ENCODE measurements at regions of chr10 and their contacts with region 1.

Region 1: GRCh38 chr10:27241652-27242472 is 1.3 kb upstream of the ACBD5 start:
- DNase-seq: peak; percentile 94
- ATAC-seq: peak; percentile 71
- H3K4me3 Mint-ChIP-seq: peak overlapping the region; percentile 98
- H3K27ac Mint-ChIP-seq: peak overlapping the region; percentile 100
- H3K4me1 Mint-ChIP-seq: peaks cover 28% of the 10 kb centered on the region
- H3K27me3 Mint-ChIP-seq: no peaks in the 10 kb centered on the region

Region 2: GRCh38 chr10:26437637-26438461 is 804.0 kb before region 1 on chr10 and contains the start of gene APBB1IP:
- CTCF ChIA-PET with region 1: no interaction called
- POLR2A ChIA-PET with region 1: no interaction called
- intact Hi-C with region 1: loop called in 1 of 2 experiments (anchors 5 kb)
- DNase-seq: peak; percentile 73
- ATAC-seq: peak; percentile 56
- H3K4me3 Mint-ChIP-seq: peak within 1 kb of the TSS; percentile 89
- H3K27ac Mint-ChIP-seq: peak within 1 kb of the TSS; percentile 97
- H3K4me1 Mint-ChIP-seq: peaks cover 49% of the 10 kb centered on the region
- H3K27me3 Mint-ChIP-seq: no peaks in the 10 kb centered on the region
- total RNA-seq, gene APBB1IP: 53.3 to 66.4 TPM

Region 3: GRCh38 chr10:27099916-27100812 is 141.7 kb before region 1 on chr10 and contains the start of gene ANKRD26:
- CTCF ChIA-PET with region 1: no interaction called
- POLR2A ChIA-PET with region 1: interaction called, 3 read pairs
- intact Hi-C with region 1: loop called in 1 of 2 experiments (anchors 2 kb)
- DNase-seq: peak; percentile 97
- ATAC-seq: peak; percentile 66
- H3K4me3 Mint-ChIP-seq: peak within 1 kb of the TSS; percentile 84
- H3K27ac Mint-ChIP-seq: peak within 1 kb of the TSS; percentile 93
- H3K4me1 Mint-ChIP-seq: peaks cover 49% of the 10 kb centered on the region
- H3K27me3 Mint-ChIP-seq: no peaks in the 10 kb centered on the region
- total RNA-seq, gene ANKRD26: 10.2 to 13.2 TPM

Region 4: DNA sequence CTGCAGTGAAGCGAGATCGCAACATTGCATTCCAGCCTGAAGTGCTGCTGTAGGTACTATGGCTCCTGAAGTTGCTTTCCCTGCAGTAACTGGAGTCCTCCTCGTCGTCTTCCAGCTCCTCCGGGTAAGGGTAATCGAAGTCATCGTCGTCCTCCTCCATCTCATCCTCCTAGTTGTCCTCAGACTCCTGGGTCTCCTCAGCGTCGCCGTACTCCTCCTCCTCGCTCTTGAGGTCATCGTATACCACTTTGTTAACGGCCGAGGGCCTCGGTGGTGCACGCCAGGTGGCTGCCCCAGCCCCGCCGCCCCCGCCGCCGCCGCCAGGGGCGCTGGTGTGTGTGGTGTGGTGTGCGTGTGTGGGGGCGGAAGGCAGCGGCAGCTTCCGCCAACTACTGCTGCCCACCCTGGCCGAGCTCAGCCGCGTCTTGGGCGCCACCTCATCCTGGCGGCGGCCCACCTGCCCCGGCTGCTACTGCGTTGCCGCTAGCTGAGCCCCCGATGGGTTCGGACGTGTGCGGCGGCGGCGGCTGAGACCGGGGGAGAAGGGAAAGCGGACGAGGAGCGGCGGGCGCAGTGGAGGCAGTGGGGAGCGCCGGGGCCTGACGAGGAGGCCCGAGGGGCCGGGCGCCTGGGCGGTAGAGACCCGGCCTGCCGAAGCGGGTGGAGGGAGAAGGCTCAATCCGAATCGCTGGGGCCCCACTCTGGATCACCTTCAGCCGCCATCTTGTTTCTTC is 10.6 kb after region 1 on chr10:
- CTCF ChIA-PET with region 1: interaction called, 18 read pairs
- POLR2A ChIA-PET with region 1: interaction called, 7 read pairs
- intact Hi-C with region 1: loop called (anchors 1 kb)
- DNase-seq: peak; percentile 90
- ATAC-seq: peak; percentile 93
- H3K4me3 Mint-ChIP-seq: peak overlapping the region; percentile 72
- H3K27ac Mint-ChIP-seq: peak overlapping the region; percentile 66
- H3K4me1 Mint-ChIP-seq: peaks cover 15% of the 10 kb centered on the region
- H3K27me3 Mint-ChIP-seq: peaks cover 5% of the 10 kb centered on the region

Region 5: DNA sequence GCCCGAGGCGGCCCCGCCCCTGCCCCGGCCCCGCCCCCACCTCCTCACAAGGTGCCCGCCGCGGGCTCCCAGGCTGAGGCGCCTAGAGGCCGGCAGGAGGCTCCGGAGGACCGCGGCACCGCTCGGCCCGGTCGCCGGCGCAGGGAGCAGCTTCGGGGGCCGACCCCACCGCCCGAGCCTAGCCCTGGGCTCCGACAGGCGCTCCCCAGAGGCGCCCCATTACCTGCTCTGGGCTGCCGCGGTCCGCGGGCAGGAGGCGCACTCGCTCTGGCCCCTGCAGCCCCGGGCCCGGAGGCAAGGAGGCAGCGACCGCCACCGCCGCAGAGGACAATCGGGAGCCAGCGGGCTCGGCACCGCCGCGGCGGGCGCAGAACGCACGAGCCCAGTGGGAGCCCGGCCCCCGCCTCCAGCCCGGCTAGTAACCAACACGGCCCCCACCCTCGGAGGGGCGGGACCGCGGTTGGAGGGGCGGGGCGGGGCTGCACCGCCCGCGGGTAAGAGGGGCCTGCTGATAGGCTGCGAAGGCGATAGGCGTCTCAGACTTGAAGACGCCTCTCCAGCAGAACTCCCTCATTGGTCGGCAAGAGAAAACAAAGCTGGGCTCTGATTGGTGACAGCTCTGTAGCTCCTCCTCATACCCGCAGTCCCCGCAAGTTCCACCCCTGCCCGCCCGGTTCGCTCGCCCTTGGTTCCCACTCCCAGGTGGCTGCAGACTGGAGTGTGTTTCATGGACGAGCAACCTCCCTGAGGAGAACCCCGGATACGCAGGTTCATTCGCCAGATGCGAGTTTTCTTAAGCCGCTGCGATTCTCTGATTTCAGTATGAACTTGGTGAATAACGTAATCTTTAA is 1061.0 kb after region 1 on chr10 and contains the start of gene MPP7:
- CTCF ChIA-PET with region 1: no interaction called
- POLR2A ChIA-PET with region 1: no interaction called
- intact Hi-C with region 1: loop called in 1 of 2 experiments (anchors 1 kb)
- DNase-seq: peak; percentile 97
- ATAC-seq: peak; percentile 97
- H3K4me3 Mint-ChIP-seq: peak within 1 kb of the TSS; percentile 90
- H3K27ac Mint-ChIP-seq: peak within 1 kb of the TSS; percentile 80
- H3K4me1 Mint-ChIP-seq: peaks cover 49% of the 10 kb centered on the region
- H3K27me3 Mint-ChIP-seq: no peaks in the 10 kb centered on the region
- total RNA-seq, gene MPP7: 10.9 to 11.0 TPM

Measured in activated CD4-positive, alpha-beta T cell treated with anti-CD3 and anti-CD28 coated beads for 36 hours (primary cell).